Naive thymus-derived CD4-positive, alpha-beta T cell (primary cell): ENCODE measurements at regions of chr3 and their contacts with region 1.

Region 1: GRCh38 chr3:55180936-55181535 is 253.2 kb upstream of the LRTM1 start:
- DNase-seq: no peak
- ATAC-seq: no peak
- H3K4me3 ChIP-seq: no peak overlapping the region
- H3K4me3 Mint-ChIP-seq: no peak overlapping the region
- H3K27ac ChIP-seq: no peak overlapping the region
- H3K27ac Mint-ChIP-seq: no peak overlapping the region
- H3K4me1 ChIP-seq: no peaks in the 10 kb centered on the region
- H3K4me1 Mint-ChIP-seq: no peaks in the 10 kb centered on the region
- H3K27me3 ChIP-seq: no peaks in the 10 kb centered on the region
- H3K27me3 Mint-ChIP-seq: peaks cover 0 to 5% (median 0%) of the 10 kb centered on the region in 5 donors

Region 2: DNA sequence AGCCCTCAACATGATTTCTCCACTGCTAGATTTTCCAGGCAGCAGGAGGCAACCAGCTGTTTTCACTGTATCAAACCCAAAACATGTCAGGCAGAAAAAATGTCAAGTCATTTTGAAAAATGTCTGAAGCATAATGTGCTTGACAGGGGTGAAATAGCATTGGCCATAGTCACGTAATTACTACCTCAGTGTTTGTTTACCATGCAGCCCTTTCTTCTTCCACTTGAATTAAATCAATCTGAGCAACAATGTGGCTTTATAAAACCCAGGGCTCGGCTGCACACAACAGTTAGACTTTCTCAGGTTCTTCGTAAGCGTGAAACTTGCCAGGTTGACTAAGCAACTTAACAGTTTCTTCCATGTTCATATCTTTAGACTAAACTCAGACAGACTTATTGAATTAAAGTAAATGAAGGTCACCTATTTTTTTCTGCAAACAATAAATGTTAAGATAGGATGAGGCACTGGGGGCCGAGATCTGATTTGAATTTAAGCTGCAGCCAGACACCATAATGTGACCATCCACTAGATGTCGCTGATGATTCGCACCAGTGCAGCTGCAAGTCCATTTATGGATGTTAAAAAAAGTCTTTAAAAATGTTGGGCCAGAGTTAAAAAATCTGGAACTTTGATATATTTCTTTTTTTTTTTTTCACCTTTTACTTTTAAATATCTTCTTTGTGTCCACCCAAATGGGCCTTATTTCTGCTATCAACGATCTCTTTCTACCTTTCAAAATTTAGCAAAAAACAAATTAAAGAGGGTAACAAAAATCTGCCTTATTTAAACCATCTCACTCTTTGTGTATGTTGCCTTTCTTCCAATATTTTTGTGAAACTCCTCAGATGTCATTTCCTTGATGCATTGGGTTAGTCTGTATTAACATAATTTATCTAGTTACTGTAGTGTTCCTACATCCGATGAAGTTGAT is 752.8 kb before region 1 on chr3:
- CTCF ChIA-PET with region 1: no interaction called
- POLR2A ChIA-PET with region 1: no interaction called
- intact Hi-C with region 1: loop called in 1 of 2 experiments (anchors 5 kb)
- DNase-seq: peak in 4 of 9 donors; percentile 4 to 15 (median 10)
- ATAC-seq: no peak
- H3K4me3 ChIP-seq: no peak overlapping the region
- H3K4me3 Mint-ChIP-seq: no peak overlapping the region
- H3K27ac ChIP-seq: no peak overlapping the region
- H3K27ac Mint-ChIP-seq: no peak overlapping the region
- H3K4me1 ChIP-seq: no peaks in the 10 kb centered on the region
- H3K4me1 Mint-ChIP-seq: no peaks in the 10 kb centered on the region
- H3K27me3 ChIP-seq: no peaks in the 10 kb centered on the region
- H3K27me3 Mint-ChIP-seq: peaks cover 0 to 13% (median 11%) of the 10 kb centered on the region in 5 donors

Region 3: DNA sequence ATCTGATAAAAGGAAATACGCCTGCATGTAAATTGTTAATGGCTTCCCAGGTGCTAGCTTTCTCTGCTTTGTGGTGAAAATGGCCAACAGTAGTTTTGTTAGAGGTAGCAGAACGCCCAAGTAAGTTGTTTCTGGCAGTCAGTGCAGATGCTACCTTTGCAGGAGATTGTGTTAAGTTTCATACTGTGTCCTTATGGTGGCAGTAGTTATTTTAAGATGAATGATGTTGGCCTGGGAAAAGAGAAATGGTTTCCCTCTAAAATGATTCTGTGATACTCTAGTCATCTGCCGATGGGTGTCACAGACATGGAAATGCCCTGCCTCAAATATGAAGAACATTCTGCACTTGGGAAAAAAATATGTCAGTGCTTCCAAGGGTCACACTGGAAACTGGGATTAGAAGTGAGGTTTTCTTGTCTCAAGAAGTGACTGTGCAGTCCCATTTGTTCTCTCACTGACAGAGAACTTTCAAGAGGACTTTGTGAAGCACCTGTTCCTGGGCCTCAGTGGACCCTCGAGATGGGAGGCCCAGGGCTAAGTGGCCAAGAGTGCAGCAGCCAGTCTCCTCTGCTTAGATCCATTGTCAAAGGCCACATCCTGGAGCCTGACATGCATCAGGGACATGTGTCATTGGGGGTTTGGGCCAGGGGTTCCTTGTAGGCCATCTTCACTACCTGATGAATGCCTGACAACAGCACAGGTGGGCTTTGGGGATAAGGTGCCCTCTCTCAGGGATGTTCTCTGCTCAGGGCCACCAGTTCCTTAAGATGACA is 665.4 kb before region 1 on chr3:
- CTCF ChIA-PET with region 1: no interaction called
- POLR2A ChIA-PET with region 1: no interaction called
- intact Hi-C with region 1: no loop called
- DNase-seq: no peak
- ATAC-seq: no peak
- H3K4me3 ChIP-seq: no peak overlapping the region
- H3K4me3 Mint-ChIP-seq: no peak overlapping the region
- H3K27ac ChIP-seq: no peak overlapping the region
- H3K27ac Mint-ChIP-seq: no peak overlapping the region
- H3K4me1 ChIP-seq: no peaks in the 10 kb centered on the region
- H3K4me1 Mint-ChIP-seq: no peaks in the 10 kb centered on the region
- H3K27me3 ChIP-seq: no peaks in the 10 kb centered on the region
- H3K27me3 Mint-ChIP-seq: peaks cover 0 to 9% (median 0%) of the 10 kb centered on the region in 5 donors

Region 4: GRCh38 chr3:54853573-54854404 is 327.2 kb before region 1 on chr3:
- CTCF ChIA-PET with region 1: no interaction called
- POLR2A ChIA-PET with region 1: no interaction called
- intact Hi-C with region 1: loop called in 1 of 2 experiments (anchors 10 kb)
- DNase-seq: peak in 5 of 9 donors; percentile 2 to 45 (median 9)
- ATAC-seq: peak; percentile 37
- H3K4me3 ChIP-seq: no peak overlapping the region
- H3K4me3 Mint-ChIP-seq: no peak overlapping the region
- H3K27ac ChIP-seq: no peak overlapping the region
- H3K27ac Mint-ChIP-seq: no peak overlapping the region
- H3K4me1 ChIP-seq: no peaks in the 10 kb centered on the region
- H3K4me1 Mint-ChIP-seq: no peaks in the 10 kb centered on the region
- H3K27me3 ChIP-seq: no peaks in the 10 kb centered on the region
- H3K27me3 Mint-ChIP-seq: peaks cover 0 to 17% (median 12%) of the 10 kb centered on the region in 5 donors